SK-N-SH (cell line): ENCODE measurements at regions of chr6 and their contacts with region 1.

Region 1: GRCh38 chr6:24855395-24856245 is 56.9 kb upstream of the ARMH2 start:
- DNase-seq: peak; percentile 73
- H3K4me3 ChIP-seq: no peak overlapping the region; a peak in 1 of 4 replicates
- H3K27ac ChIP-seq: no peak overlapping the region
- H3K4me1 ChIP-seq: no peaks in the 10 kb centered on the region
- H3K27me3 ChIP-seq: no peaks in the 10 kb centered on the region
- CTCF ChIP-seq: peak; percentile 93
- EP300 ChIP-seq: no peak
- RAD21 ChIP-seq: peak; percentile 98

Region 2: GRCh38 chr6:24621626-24622289 is 233.9 kb before region 1 on chr6:
- CTCF ChIA-PET with region 1: no interaction called
- POLR2A ChIA-PET with region 1: no interaction called
- DNase-seq: no peak
- H3K4me3 ChIP-seq: no peak overlapping the region
- H3K27ac ChIP-seq: no peak overlapping the region
- H3K4me1 ChIP-seq: no peaks in the 10 kb centered on the region
- H3K27me3 ChIP-seq: no peaks in the 10 kb centered on the region
- CTCF ChIP-seq: no peak
- EP300 ChIP-seq: no peak
- RAD21 ChIP-seq: no peak

Region 3: GRCh38 chr6:24844903-24845302 is 10.7 kb before region 1 on chr6:
- CTCF ChIA-PET with region 1: interaction called, 21 read pairs
- POLR2A ChIA-PET with region 1: no interaction called
- DNase-seq: no peak
- H3K4me3 ChIP-seq: no peak overlapping the region
- H3K27ac ChIP-seq: no peak overlapping the region
- H3K4me1 ChIP-seq: no peaks in the 10 kb centered on the region; a peak in 1 of 4 replicates
- H3K27me3 ChIP-seq: no peaks in the 10 kb centered on the region
- CTCF ChIP-seq: no peak
- EP300 ChIP-seq: no peak
- RAD21 ChIP-seq: no peak

Region 4: GRCh38 chr6:24883618-24884017 is 28.0 kb after region 1 on chr6:
- CTCF ChIA-PET with region 1: interaction called, 10 read pairs
- POLR2A ChIA-PET with region 1: no interaction called
- DNase-seq: no peak
- H3K4me3 ChIP-seq: no peak overlapping the region
- H3K27ac ChIP-seq: no peak overlapping the region
- H3K4me1 ChIP-seq: peaks cover 0 to 2% of the 10 kb centered on the region in 2 experiments; a peak in 2 of 4 replicates
- H3K27me3 ChIP-seq: no peaks in the 10 kb centered on the region
- CTCF ChIP-seq: no peak
- EP300 ChIP-seq: no peak
- RAD21 ChIP-seq: no peak

Region 5: DNA sequence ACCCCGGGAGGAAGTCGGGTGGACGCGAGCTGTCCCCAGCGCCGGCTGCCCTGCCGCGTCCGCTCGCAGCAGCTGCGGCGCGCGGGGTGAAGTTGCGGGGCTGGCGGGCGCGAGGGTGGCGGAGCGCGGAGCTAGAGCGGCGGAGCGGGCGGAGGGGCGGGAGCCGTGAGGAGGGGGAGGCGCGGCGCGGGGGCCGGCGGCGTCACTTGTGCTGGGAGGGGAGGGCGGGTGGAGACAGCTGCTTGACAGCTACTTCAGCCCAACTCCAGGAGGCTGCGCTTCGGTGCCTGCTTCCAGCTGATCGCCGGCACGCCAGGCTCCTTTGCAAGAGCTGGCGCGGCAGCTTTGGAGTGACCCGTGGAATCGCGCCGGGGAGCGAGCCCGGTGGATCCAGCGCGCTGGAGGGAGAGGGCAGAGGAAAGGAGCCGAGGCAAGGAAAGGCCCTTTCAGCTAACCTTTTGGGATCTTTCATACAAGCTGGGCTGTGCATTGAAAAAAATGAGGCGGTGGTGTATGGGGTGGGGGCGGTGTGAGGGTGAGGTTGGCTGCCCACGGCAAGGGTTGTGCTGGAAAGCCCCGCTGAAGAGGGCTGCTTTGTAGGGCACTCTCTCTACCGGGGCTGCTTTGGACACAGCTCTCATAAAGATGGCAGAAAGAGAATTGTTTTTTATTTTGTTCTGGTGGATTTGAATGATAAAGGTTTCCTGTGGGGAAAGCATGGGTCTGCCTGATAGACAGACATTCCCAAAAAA is 55.5 kb after region 1 on chr6:
- CTCF ChIA-PET with region 1: interaction called, 20 read pairs
- POLR2A ChIA-PET with region 1: no interaction called
- DNase-seq: peak; percentile 81
- H3K4me3 ChIP-seq: peak overlapping the region; percentile 57 to 72
- H3K27ac ChIP-seq: no peak overlapping the region
- H3K4me1 ChIP-seq: peaks cover 0 to 12% of the 10 kb centered on the region in 2 experiments; a peak in 1 of 4 replicates
- H3K27me3 ChIP-seq: peaks cover 18% of the 10 kb centered on the region
- CTCF ChIP-seq: no peak
- EP300 ChIP-seq: no peak
- RAD21 ChIP-seq: no peak

Region 6: DNA sequence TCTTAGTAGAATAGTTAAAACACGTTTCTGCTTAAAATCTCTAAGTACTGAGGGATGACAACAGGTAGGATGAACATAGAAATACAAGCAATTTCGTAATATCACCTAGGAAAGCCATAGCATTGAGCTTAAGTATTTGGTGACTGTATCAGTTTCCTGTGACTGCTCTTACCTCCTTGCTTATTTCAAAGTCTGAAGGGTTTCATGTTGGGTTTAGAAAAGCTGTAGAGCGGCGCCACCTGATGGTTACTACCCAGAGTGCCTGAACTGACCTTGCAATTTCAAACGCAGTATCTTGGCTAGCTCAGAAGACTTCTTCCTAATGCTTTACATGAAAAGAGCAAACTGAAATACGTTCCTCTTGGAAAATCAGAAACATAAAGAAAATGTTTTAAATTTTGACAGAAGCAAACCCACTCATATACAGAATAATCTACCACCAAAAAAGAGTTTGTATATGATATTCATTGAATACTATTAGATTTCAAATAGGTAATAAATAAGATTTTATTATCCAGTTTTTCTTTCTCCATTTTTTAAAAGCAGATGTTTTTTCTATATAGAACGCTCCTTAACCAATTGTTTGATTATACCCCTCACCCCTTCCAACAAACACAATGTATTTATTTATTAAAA is 162.4 kb after region 1 on chr6:
- CTCF ChIA-PET with region 1: interaction called, 18 read pairs
- POLR2A ChIA-PET with region 1: no interaction called
- DNase-seq: no peak
- H3K4me3 ChIP-seq: peak overlapping the region in 1 of 2 experiments; percentile 45; a peak in 1 of 4 replicates
- H3K27ac ChIP-seq: no peak overlapping the region
- H3K4me1 ChIP-seq: peaks cover 5 to 12% of the 10 kb centered on the region in 2 experiments
- H3K27me3 ChIP-seq: no peaks in the 10 kb centered on the region
- CTCF ChIP-seq: peak; percentile 59
- EP300 ChIP-seq: no peak
- RAD21 ChIP-seq: peak; percentile 66

Region 7: DNA sequence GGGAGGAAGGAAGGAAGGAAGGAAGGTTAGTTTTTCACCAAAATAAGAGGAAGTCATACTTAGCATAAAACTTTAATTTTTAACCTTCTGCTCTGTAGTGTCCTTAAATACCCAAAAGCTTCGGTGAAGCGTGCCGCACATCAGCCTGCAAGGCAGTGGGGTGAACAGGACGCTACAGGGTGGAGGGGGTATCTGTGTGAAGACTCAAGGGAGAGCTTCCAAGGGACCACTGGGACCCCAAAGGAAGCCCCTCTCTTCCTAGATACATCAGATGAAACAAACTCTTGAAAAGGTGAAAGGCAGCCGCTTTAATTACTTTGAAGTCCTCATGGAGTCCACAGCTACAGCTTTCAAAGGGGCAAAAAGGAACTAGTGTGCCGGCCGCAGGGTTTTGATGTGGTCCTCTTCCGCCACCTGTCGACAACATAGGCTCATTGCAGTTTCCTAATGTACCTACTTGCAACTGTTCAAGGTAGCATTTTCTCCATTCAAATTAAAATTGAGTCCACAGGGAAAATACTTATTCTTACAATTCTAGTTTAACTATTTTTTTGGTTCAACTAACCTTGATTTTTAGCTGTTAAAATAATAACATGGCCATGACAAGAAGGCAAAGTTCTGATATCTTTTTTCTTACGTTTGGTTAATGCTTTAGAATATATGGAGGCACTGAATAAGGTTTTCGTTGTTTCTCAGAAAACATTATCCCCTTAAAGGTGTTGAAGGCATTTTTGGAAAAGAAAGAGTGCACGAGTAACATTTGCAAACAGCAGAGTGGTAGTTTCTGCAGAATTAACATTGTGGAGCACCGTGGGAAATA is 215.1 kb after region 1 on chr6:
- CTCF ChIA-PET with region 1: interaction called, 64 read pairs
- POLR2A ChIA-PET with region 1: no interaction called
- DNase-seq: peak; percentile 68
- H3K4me3 ChIP-seq: peak overlapping the region; percentile 33 to 46; a peak in 2 of 4 replicates
- H3K27ac ChIP-seq: no peak overlapping the region; a peak in 1 of 4 replicates
- H3K4me1 ChIP-seq: peaks cover 0 to 2% of the 10 kb centered on the region in 2 experiments; a peak in 2 of 4 replicates
- H3K27me3 ChIP-seq: no peaks in the 10 kb centered on the region
- CTCF ChIP-seq: peak; percentile 96
- EP300 ChIP-seq: no peak
- RAD21 ChIP-seq: peak; percentile 98